Calu3 (cell line): ENCODE measurements at regions of chr7 and their contacts with region 1.

Region 1: GRCh38 chr7:99210264-99210970 is 2.5 kb upstream of the KPNA7 start:
- DNase-seq: peak; percentile 40
- H3K4me3 Mint-ChIP-seq: peak overlapping the region; percentile 50
- H3K27ac Mint-ChIP-seq: peak overlapping the region; percentile 100
- H3K4me1 Mint-ChIP-seq: peaks cover 25% of the 10 kb centered on the region
- H3K27me3 Mint-ChIP-seq: no peaks in the 10 kb centered on the region
- CTCF ChIP-seq: no peak

Region 2: DNA sequence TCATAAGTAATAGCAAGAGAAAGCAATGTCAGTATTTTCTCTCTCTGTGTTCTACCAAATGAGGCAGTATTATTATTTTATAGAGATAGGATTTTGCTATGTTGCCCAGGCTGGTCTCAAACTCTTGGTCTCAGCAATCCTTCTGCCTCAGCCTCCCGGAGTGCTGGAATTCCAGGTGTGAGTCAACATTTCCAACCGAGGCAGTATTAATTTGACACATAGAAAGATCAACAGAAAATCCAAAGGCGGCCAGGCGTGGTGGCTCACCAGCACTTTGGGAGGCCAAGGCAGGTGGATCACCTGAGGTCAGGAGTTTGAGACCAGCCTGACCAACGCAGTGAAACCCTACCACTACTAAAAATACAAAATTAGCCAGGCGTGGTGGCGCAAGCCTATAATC is 138.3 kb before region 1 on chr7:
- CTCF ChIA-PET with region 1: interaction called, 11 read pairs
- intact Hi-C with region 1: no loop called
- DNase-seq: no peak
- H3K4me3 Mint-ChIP-seq: no peak overlapping the region
- H3K27ac Mint-ChIP-seq: no peak overlapping the region
- H3K4me1 Mint-ChIP-seq: peaks cover 9% of the 10 kb centered on the region
- H3K27me3 Mint-ChIP-seq: no peaks in the 10 kb centered on the region
- CTCF ChIP-seq: no peak

Region 3: GRCh38 chr7:99143853-99144672 is 66.4 kb before region 1 on chr7 and contains the start of gene SMURF1:
- CTCF ChIA-PET with region 1: interaction called, 5 read pairs
- intact Hi-C with region 1: loop called (anchors 5 kb)
- DNase-seq: peak; percentile 71
- H3K4me3 Mint-ChIP-seq: peak within 1 kb of the TSS; percentile 85
- H3K27ac Mint-ChIP-seq: peak within 1 kb of the TSS; percentile 86
- H3K4me1 Mint-ChIP-seq: peaks cover 7% of the 10 kb centered on the region
- H3K27me3 Mint-ChIP-seq: no peaks in the 10 kb centered on the region
- CTCF ChIP-seq: no peak
- total RNA-seq, gene SMURF1: 28.2 and 29.7 TPM in 2 replicates

Region 4: DNA sequence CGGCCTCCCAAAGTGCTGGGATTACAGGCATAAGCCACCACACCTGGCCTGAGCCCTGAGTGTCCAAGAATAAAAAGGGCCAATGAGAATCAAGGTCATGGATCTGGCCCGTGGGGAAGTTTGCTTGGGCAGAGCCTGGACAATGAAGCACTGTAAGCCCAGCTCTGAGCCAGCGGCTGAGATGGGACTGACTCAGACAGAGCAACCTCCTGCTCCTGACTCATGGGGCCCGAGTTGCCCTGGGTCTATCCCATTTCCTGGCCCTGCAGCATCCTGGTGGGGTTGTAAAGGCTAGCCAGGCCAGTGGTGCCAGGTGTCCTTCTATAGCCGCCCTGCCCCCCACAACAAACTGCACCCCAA is 57.0 kb after region 1 on chr7:
- CTCF ChIA-PET with region 1: no interaction called
- intact Hi-C with region 1: loop called (anchors 5 kb)
- DNase-seq: peak; percentile 84
- H3K4me3 Mint-ChIP-seq: no peak overlapping the region
- H3K27ac Mint-ChIP-seq: peak overlapping the region; percentile 89
- H3K4me1 Mint-ChIP-seq: peaks cover 21% of the 10 kb centered on the region
- H3K27me3 Mint-ChIP-seq: no peaks in the 10 kb centered on the region
- CTCF ChIP-seq: no peak